CD4-positive, alpha-beta memory T cell (primary cell): ENCODE measurements at regions of chr11 and their contacts with region 1.

Region 1: GRCh38 chr11:33700425-33701271 is at the start of gene C11orf91:
- DNase-seq: peak; percentile 89 to 95 (median 94)
- H3K4me3 ChIP-seq: peak within 1 kb of the TSS; percentile 7 to 53
- H3K4me3 Mint-ChIP-seq: peak within 1 kb of the TSS; percentile 89 to 96 (median 92)
- H3K27ac ChIP-seq: peak within 1 kb of the TSS; percentile 29
- H3K27ac Mint-ChIP-seq: peak within 1 kb of the TSS; percentile 78 to 93 (median 88)
- H3K4me1 ChIP-seq: peaks cover 15% of the 10 kb centered on the region
- H3K4me1 Mint-ChIP-seq: peaks cover 11 to 22% (median 19%) of the 10 kb centered on the region in 4 donors
- H3K27me3 ChIP-seq: no peaks in the 10 kb centered on the region
- H3K27me3 Mint-ChIP-seq: peaks cover 5 to 13% of the 10 kb centered on the region in 2 donors
- total RNA-seq, gene C11orf91: 0.49 TPM in 1 of 2 experiments, not detected in the other

Region 2: DNA sequence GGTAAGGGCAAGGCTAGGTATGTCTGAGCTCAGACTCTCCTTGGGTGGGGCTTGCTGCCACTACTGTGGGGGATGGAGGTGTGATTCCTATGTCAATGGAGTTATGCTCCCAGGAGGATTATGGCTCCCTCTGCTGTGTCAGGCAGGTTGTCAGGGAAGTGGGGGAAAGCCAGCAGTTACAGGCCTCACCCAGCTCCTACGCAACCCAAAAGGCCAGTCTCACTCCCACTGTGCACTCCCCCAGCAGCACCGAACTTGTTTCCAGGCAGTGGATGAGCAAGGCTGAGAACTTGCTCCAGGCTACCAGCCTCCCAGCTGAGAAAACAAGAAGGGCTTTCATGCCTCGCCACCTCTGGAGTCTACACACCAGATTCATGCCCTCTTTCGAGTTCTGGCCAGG is 18.2 kb before region 1 on chr11:
- CTCF ChIA-PET with region 1: no interaction called
- POLR2A ChIA-PET with region 1: no interaction called
- intact Hi-C with region 1: no loop called
- DNase-seq: no peak
- H3K4me3 ChIP-seq: no peak overlapping the region
- H3K4me3 Mint-ChIP-seq: no peak overlapping the region
- H3K27ac ChIP-seq: no peak overlapping the region
- H3K27ac Mint-ChIP-seq: peak overlapping the region in 1 of 7 donors; percentile 3
- H3K4me1 ChIP-seq: no peaks in the 10 kb centered on the region
- H3K4me1 Mint-ChIP-seq: no peaks in the 10 kb centered on the region
- H3K27me3 ChIP-seq: peaks cover 5% of the 10 kb centered on the region
- H3K27me3 Mint-ChIP-seq: peaks cover 20 to 42% of the 10 kb centered on the region in 2 donors

Region 3: DNA sequence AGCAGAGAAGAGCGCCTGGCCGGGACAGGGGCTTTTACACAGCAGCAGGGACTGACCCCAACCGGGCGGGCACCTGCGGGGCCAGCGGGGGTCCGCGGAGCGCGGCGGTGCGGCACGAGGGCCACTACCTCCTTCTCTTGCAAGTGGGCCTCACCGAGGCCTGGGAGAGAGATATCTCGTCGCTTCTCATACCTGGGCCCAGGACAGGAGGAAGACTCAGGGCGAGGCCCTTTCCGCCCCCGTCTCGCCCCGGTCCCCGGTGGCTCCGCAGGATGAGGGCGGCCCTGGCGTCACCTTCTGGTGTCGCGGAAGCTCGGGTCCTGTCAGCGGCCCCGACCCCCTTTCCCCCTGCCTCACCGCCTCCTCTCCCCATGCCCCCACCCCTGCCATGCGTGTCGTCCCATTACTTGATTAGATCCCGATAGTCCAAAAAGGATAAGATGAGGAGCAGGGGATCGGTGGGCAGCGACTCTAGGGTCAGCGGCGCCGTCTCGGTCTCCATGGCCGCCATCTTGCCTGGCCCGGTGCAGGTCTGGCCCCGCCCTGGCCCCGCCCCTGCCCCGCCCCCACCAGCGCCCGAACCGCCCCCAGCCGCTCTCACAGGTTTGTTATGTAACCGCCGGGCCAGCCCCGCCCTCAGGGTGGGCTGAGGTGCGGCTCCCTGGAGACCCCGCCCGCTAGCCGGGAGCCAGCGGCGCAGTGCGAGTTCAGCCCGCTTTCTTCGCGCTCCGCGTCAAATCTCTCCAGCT is 73.5 kb after region 1 on chr11 and contains the start of gene FBXO3:
- CTCF ChIA-PET with region 1: no interaction called
- POLR2A ChIA-PET with region 1: interaction called, 6 read pairs
- intact Hi-C with region 1: loop called (anchors 1 kb)
- DNase-seq: peak; percentile 88 to 89 (median 89)
- H3K4me3 ChIP-seq: peak within 1 kb of the TSS; percentile 85 to 90
- H3K4me3 Mint-ChIP-seq: peak within 1 kb of the TSS; percentile 93 to 99 (median 96)
- H3K27ac ChIP-seq: peak within 1 kb of the TSS; percentile 79
- H3K27ac Mint-ChIP-seq: peak within 1 kb of the TSS; percentile 94 to 99 (median 99)
- H3K4me1 ChIP-seq: peaks cover 42% of the 10 kb centered on the region
- H3K4me1 Mint-ChIP-seq: peaks cover 31 to 64% (median 49%) of the 10 kb centered on the region in 4 donors
- H3K27me3 ChIP-seq: no peaks in the 10 kb centered on the region
- H3K27me3 Mint-ChIP-seq: peaks cover 0 to 3% of the 10 kb centered on the region in 2 donors
- total RNA-seq, gene FBXO3: 55.1 to 55.6 TPM